Sigmoid colon (tissue), 7 donors: ENCODE measurements at regions of chr10 and their contacts with region 1.

Region 1: GRCh38 chr10:124802313-124802675 is 675 bp downstream of the ABRAXAS2 start:
- DNase-seq: no peak
- H3K4me3 ChIP-seq: peak overlapping the region; percentile 77 to 97 (median 95)
- H3K27ac ChIP-seq: peak overlapping the region; percentile 77 to 86 (median 83)
- H3K4me1 ChIP-seq: peaks cover 0 to 17% (median 11%) of the 10 kb centered on the region in 4 donors
- H3K27me3 ChIP-seq: no peaks in the 10 kb centered on the region
- CTCF ChIP-seq: no peak
- EP300 ChIP-seq: no peak
- POLR2A ChIP-seq: no peak

Region 2: DNA sequence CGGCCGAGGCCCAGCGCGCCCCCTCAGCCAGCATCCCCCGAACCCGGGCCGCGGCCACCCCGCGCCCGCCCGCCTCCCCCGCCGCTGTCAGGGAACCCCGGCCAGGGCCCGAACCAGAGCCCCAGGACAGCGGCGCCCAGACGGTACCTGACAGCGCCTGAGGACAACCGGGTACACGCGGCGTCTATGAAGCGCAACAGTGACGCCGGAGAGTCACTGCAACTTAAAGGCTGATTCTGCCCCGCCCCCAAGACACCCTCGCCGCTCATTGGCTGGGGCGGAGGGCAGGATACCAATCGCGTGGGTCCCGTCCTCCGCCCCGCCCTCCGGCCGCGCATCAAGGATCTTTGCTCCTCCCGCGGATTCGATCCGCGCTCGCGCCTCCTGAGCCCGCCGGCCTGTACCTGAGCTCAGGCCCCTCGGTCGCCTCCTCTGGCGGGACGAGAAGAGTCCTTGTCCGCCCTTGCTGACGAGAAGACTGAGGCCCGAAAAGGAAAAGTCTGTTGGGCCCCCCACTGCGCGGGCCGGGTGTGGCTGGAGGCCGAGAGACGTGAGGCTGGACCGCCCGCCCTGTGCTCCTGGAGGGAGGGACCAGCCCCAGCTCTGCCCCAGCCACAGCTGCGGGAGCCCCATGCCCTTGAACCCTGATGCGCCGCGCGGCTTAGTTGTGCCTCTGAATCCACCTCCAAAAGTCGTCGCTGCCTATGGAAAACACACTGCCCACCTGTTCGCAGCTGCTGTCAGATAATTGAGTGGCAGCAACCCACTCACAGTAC is 383.4 kb before region 1 on chr10 and contains the start of gene OAT:
- intact Hi-C with region 1: no loop called
- DNase-seq: peak; percentile 99
- H3K4me3 ChIP-seq: peak within 1 kb of the TSS; percentile 87 to 100 (median 100)
- H3K27ac ChIP-seq: peak within 1 kb of the TSS; percentile 98 to 100 (median 100)
- H3K4me1 ChIP-seq: peaks cover 0 to 45% (median 40%) of the 10 kb centered on the region in 4 donors
- H3K27me3 ChIP-seq: no peaks in the 10 kb centered on the region
- CTCF ChIP-seq: no peak
- EP300 ChIP-seq: no peak
- POLR2A ChIP-seq: peak; percentile 94 to 98
- total RNA-seq, gene OAT: 117 to 147 (median 131) TPM

Region 3: GRCh38 chr10:125822878-125823662 is 1020.8 kb after region 1 on chr10 and contains the starts of genes BCCIP and UROS:
- intact Hi-C with region 1: loop called (anchors 10 kb)
- DNase-seq: peak; percentile 95
- H3K4me3 ChIP-seq: peak within 1 kb of the TSS; percentile 91 to 97 (median 93)
- H3K27ac ChIP-seq: peak within 1 kb of the TSS; percentile 80 to 91 (median 88)
- H3K4me1 ChIP-seq: peaks cover 0 to 37% (median 31%) of the 10 kb centered on the region in 4 donors
- H3K27me3 ChIP-seq: no peaks in the 10 kb centered on the region
- CTCF ChIP-seq: no peak
- EP300 ChIP-seq: no peak
- POLR2A ChIP-seq: peak; percentile 15 to 25
- total RNA-seq, gene BCCIP: 37.7 to 54.9 (median 45.8) TPM
- total RNA-seq, gene UROS: 26.3 to 46.7 (median 36.8) TPM